GM12878 (cell line): ENCODE measurements at regions of chr15 and their contacts with region 1.

Region 1: GRCh38 chr15:50876989-50877360 is 31.5 kb upstream of the AP4E1 start:
- DNase-seq: no peak
- ATAC-seq: no peak
- H3K4me3 ChIP-seq: peak overlapping the region; percentile 33; the same call in 1 of the 2 replicates
- H3K27ac ChIP-seq: peak overlapping the region; percentile 53; the same call in 1 of the 2 replicates
- H3K4me1 ChIP-seq: peaks cover 42% of the 10 kb centered on the region
- H3K27me3 ChIP-seq: no peaks in the 10 kb centered on the region
- CTCF ChIP-seq: peak; percentile 95 to 99 (median 96)
- EP300 ChIP-seq: no peak
- POLR2A ChIP-seq: no peak
- RAD21 ChIP-seq: peak; percentile 93

Region 2: DNA sequence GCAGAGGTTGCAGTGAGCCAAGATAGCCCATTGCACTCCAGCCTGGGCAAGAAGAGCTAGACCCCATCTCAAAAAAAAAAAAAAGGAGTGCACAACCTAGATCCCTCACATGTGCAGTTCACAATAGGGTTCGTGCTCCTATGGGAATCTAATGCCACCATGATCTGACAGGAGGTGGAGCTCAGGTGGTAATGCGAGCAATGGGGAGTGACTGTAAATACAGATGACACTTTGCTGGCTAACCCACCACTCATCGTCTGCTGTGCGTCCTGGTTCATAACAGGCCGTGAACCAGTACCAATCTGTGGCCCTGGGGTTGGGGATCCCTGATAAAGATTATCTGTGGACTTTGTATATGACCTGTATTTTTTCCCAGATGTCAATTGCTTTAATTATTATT is 436.0 kb before region 1 on chr15:
- CTCF ChIA-PET with region 1: no interaction called
- POLR2A ChIA-PET with region 1: interaction called, 6 read pairs
- RAD21 ChIA-PET with region 1: no interaction called
- SMC1A ChIA-PET with region 1: no interaction called
- in situ Hi-C with region 1: loop called (anchors 10 kb)
- intact Hi-C with region 1: no loop called
- DNase-seq: no peak
- ATAC-seq: no peak
- H3K4me3 ChIP-seq: no peak overlapping the region
- H3K27ac ChIP-seq: no peak overlapping the region
- H3K4me1 ChIP-seq: peaks cover 13% of the 10 kb centered on the region
- H3K27me3 ChIP-seq: no peaks in the 10 kb centered on the region
- CTCF ChIP-seq: no peak
- EP300 ChIP-seq: no peak
- POLR2A ChIP-seq: no peak
- RAD21 ChIP-seq: no peak

Region 3: GRCh38 chr15:50686468-50687301 is 190.3 kb before region 1 on chr15 and contains the start of gene TRPM7:
- CTCF ChIA-PET with region 1: no interaction called
- POLR2A ChIA-PET with region 1: interaction called, 6 read pairs
- RAD21 ChIA-PET with region 1: interaction called, 3 read pairs
- SMC1A ChIA-PET with region 1: interaction called, 6 read pairs
- in situ Hi-C with region 1: loop called (anchors 5 kb)
- intact Hi-C with region 1: loop called (anchors 2 kb)
- DNase-seq: peak; percentile 56
- ATAC-seq: peak; percentile 87
- H3K4me3 ChIP-seq: peak within 1 kb of the TSS; percentile 91
- H3K27ac ChIP-seq: peak within 1 kb of the TSS; percentile 86
- H3K4me1 ChIP-seq: no peaks in the 10 kb centered on the region; the same call in none of the 2 replicates
- H3K27me3 ChIP-seq: no peaks in the 10 kb centered on the region
- CTCF ChIP-seq: no peak
- EP300 ChIP-seq: no peak
- POLR2A ChIP-seq: peak; percentile 95
- RAD21 ChIP-seq: no peak
- polyA plus RNA-seq, gene TRPM7: 4.5 to 9.9 TPM

Region 4: DNA sequence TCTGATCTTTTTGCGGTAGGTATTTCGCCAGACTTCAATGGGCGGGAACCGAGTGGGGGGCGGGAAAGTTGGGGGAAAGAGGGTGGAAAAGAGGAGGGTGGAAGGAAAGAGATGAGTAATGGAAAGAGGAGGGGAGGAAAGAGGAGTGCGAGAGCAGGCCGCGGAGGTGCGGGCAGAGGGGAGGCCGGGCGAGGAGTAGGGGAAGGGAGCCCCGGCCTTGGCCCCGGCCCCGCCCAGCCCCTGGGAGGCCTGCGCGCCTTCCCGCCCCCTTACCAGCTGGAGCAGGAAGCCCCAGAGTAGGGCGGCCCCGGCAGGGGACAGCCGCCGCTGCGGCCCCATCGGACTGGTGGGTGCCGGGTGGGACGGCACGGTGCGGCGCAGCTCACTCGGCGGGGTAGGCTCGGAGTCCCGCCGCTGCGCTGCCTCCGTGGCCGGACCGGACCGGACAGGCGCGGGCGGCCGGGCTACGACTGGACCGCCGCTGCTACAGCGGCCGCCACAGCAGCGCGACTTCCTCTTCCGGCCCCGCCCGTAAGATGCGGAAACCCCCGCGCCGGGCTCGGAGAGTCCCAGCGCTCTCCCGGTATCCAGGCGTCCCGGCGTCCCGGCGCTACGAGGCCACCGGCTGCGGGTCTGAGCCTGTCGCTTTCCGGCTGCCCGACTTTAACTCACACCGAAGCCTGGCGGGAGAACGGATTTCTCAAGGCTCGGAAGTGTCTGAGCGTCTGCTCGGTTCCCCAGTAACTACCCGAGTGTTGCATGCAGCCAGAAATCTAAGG is 111.6 kb before region 1 on chr15 and contains the start of gene SPPL2A:
- CTCF ChIA-PET with region 1: interaction called, 8 read pairs
- POLR2A ChIA-PET with region 1: interaction called, 6 read pairs
- RAD21 ChIA-PET with region 1: interaction called, 4 read pairs
- SMC1A ChIA-PET with region 1: interaction called, 17 read pairs
- in situ Hi-C with region 1: no loop called
- intact Hi-C with region 1: no loop called
- DNase-seq: no peak
- ATAC-seq: peak; percentile 96
- H3K4me3 ChIP-seq: peak within 1 kb of the TSS; percentile 88
- H3K27ac ChIP-seq: peak within 1 kb of the TSS; percentile 93
- H3K4me1 ChIP-seq: peaks cover 10% of the 10 kb centered on the region
- H3K27me3 ChIP-seq: no peaks in the 10 kb centered on the region
- CTCF ChIP-seq: no peak
- EP300 ChIP-seq: no peak
- POLR2A ChIP-seq: peak; percentile 94
- RAD21 ChIP-seq: no peak
- polyA plus RNA-seq, gene SPPL2A: 11.3 to 24.2 TPM

Region 5: DNA sequence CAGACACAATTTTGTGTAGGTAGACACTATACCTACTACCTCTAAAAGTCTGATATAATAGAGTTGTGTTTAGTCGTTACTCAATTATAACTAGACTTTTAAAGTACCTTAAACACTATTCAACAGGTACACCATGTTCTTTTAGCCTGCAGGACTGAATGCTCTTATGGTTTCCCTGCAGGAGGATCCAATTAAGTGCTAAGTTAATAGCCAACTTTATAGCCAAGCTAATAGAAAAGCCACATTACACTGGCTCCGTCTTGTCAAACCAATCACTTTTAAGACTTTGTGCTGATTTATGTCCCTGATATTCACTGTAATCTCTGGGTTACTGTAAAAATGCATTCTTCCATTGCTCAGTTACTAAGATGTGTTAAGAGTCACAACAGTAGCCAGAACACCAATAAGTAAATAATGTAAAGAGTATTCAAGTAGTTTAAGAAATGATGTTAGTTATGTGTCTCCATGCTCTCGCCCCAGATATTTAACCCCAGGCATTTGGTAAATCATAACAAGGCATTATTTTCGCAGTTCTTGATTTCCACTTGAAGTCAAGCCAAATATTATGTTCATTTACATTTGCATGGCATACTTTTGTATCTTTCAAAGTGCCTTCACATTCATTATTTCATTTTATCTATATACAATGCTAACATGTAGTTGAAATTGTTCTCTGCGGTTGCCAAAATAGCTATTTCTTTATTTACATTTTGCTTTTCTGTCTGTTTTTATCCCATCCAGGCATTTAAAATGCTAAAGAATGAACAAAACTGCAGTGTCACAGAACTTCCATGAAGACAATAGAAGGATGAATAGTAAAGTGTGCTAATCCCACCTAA is 11.2 kb before region 1 on chr15:
- CTCF ChIA-PET with region 1: interaction called, 22 read pairs
- POLR2A ChIA-PET with region 1: no interaction called
- RAD21 ChIA-PET with region 1: no interaction called
- SMC1A ChIA-PET with region 1: interaction called, 6 read pairs
- in situ Hi-C with region 1: no loop called
- intact Hi-C with region 1: no loop called
- DNase-seq: no peak
- ATAC-seq: no peak
- H3K4me3 ChIP-seq: no peak overlapping the region
- H3K27ac ChIP-seq: no peak overlapping the region
- H3K4me1 ChIP-seq: no peaks in the 10 kb centered on the region
- H3K27me3 ChIP-seq: no peaks in the 10 kb centered on the region
- CTCF ChIP-seq: no peak
- EP300 ChIP-seq: no peak
- POLR2A ChIP-seq: no peak
- RAD21 ChIP-seq: no peak